Esophagus muscularis mucosa (tissue), 4 donors: ENCODE measurements at regions of chr7 and their contacts with region 1.

Region 1: GRCh38 chr7:87219545-87220025 is at the start of gene TMEM243:
- DNase-seq: peak; percentile 95
- H3K4me3 ChIP-seq: peak within 1 kb of the TSS; percentile 72 to 88 (median 82)
- H3K27ac ChIP-seq: peak within 1 kb of the TSS; percentile 82 to 87 (median 85)
- H3K4me1 ChIP-seq: peaks cover 4 to 36% (median 33%) of the 10 kb centered on the region in 4 donors
- H3K27me3 ChIP-seq: no peaks in the 10 kb centered on the region
- CTCF ChIP-seq: peak in 1 of 3 experiments; percentile 6
- EP300 ChIP-seq: no peak
- POLR2A ChIP-seq: no peak
- total RNA-seq, gene TMEM243: 15.0 to 27.9 (median 19.8) TPM

Region 2: DNA sequence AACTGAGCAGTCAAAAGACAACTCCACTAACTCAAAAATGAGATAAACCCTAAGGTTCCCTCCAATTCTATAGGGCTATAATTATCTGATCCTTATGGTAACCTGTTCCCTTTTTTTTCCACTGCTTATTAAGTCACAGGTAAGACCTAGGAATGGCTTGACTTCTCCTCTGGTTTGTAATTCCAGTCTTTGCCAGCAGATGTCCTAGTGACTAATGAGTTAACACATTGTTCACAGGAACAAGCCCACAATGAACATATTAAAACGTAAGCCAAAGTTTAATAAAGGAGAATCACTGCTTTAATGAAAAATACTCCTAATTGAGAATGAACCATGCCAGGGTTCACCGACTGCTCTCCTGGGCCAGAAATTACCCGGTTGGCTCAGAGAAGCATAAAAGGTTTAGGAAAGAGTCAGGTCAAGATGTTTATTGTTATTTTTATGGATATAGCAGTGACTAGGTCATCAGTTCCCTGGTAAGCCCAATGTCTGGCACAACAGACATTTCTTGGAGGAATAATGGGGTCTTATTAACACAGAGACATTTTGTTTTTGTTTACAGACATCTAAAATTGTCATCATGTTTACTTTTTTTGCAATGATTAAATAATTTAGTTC is 280.3 kb before region 1 on chr7:
- intact Hi-C with region 1: loop called (anchors 5 kb)
- DNase-seq: no peak
- H3K4me3 ChIP-seq: no peak overlapping the region
- H3K27ac ChIP-seq: no peak overlapping the region
- H3K4me1 ChIP-seq: peaks cover 0 to 5% (median 4%) of the 10 kb centered on the region in 4 donors
- H3K27me3 ChIP-seq: no peaks in the 10 kb centered on the region
- CTCF ChIP-seq: peak; percentile 59 to 78 (median 75)
- EP300 ChIP-seq: no peak
- POLR2A ChIP-seq: no peak

Region 3: GRCh38 chr7:87345166-87345927 is 125.8 kb after region 1 on chr7 and contains the start of gene CROT:
- intact Hi-C with region 1: loop called (anchors 10 kb)
- DNase-seq: peak; percentile 98
- H3K4me3 ChIP-seq: peak within 1 kb of the TSS; percentile 68 to 71 (median 69)
- H3K27ac ChIP-seq: peak within 1 kb of the TSS; percentile 85 to 89 (median 86)
- H3K4me1 ChIP-seq: peaks cover 12 to 33% (median 31%) of the 10 kb centered on the region in 4 donors
- H3K27me3 ChIP-seq: no peaks in the 10 kb centered on the region
- CTCF ChIP-seq: no peak
- EP300 ChIP-seq: no peak
- POLR2A ChIP-seq: no peak
- total RNA-seq, gene CROT: 9.1 to 10.8 (median 9.6) TPM